ENCODE measurements at regions of chr1 and their contacts with region 1.

Region 1: DNA sequence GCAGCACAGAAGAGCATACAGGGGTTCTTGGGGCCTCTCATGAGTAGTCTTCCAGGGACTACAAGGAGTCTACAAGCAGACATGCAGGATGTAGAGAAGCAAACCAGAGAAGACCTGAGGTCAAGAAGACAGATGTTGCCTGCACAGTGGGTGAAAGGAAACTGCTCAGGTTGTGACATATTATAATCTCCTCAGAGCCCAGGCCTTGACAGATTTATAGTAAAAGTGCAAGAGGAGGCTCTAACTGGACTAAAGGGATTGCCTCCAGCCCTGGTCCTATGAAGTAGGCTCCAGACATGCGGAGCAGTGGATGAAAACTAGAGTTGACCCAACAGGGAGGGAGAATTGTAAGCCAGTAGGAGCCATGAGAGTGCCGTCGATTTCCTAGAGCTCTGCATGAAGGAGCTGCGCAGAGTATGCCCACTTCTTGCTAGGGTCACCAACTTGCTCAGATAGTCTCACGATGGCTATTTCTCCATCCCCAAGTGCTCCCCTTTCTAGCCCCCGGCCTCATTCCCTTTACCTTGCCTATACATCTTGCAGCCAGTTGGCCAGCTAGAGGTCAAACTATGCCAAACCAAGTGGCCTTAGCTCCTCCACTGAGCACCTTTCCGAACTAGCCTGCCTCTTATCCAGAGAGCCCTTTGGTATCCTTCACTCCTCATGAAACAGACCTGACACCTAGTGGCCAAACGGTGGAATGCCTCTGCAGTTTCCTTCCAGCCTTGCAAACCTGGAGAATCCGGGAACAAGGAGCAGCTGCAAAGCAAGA is 36.2 kb upstream of the IPO9 start:
- DNase-seq: peak; percentile 80
- H3K4me3 ChIP-seq: no peak overlapping the region
- H3K27ac ChIP-seq: peak overlapping the region; percentile 39
- H3K4me1 ChIP-seq: no peaks in the 10 kb centered on the region
- H3K27me3 ChIP-seq: no peaks in the 10 kb centered on the region
- CTCF ChIP-seq: peak; percentile 97

Region 2: DNA sequence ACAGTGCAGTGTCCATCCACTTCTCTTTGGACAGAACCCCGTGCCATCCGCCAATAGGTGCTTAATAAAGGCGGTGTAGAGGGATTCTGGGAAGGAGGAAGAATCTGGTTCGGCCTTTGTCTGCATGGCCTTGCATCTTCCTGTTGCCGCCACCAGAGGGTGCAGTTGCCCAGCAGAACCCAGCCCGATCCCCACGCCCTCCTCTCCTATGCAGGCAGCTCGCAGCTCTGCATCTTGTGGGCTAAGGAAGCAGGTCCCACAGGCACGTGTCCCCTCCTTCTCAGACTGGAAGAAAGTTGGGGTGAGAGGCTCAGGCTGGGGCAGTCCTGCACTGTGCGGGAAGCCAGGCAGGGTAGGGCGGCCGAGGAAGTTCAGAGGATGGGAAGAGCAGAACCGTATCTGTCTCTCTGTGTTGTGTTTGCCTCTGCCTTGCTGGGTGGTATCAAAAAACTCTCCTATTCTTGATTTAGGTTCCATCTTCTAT is 233.0 kb before region 1 on chr1:
- intact Hi-C with region 1: loop called (anchors 2 kb)
- DNase-seq: peak; percentile 76
- H3K4me3 ChIP-seq: no peak overlapping the region
- H3K27ac ChIP-seq: no peak overlapping the region
- H3K4me1 ChIP-seq: no peaks in the 10 kb centered on the region
- H3K27me3 ChIP-seq: no peaks in the 10 kb centered on the region
- CTCF ChIP-seq: peak; percentile 80

Region 3: DNA sequence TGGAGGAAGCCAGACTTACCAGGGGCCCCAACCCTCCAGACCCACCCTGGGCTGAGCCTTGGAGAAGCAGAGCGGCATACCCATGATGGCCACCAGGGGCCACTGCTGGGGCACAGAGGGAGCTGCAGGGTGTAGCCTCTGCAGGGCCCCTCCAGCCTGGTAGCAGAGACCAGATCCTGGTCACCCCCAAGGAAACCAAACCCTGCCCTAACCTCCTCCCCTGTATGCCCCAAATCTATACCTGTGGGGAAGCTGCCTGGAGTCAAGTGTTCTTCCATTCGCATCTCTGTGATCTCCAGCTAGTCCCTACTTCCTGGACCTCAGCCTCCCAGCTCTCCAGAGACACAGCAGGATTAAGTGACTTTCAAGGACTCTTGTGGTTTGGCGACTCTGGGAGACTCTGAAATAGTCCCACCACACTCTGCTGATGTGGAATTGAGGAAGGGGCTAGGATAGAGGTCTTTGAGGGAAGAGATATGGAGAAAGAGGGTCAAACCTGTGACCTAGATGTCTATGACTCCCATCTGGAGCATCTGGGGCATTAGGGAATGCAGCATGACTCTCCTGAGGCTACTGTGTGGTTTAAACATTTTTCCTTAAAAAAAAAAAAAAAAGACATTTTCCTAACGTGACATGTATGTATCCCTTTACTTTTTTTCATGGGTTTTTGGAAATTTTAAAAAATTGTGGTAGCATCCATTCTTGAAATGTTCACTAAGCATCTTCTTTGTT is 83.0 kb before region 1 on chr1:
- intact Hi-C with region 1: loop called (anchors 1 kb)
- DNase-seq: peak; percentile 78
- H3K4me3 ChIP-seq: no peak overlapping the region
- H3K27ac ChIP-seq: no peak overlapping the region
- H3K4me1 ChIP-seq: peaks cover 12% of the 10 kb centered on the region
- H3K27me3 ChIP-seq: no peaks in the 10 kb centered on the region
- CTCF ChIP-seq: peak; percentile 94